ENCODE measurements at regions of chr1 and their contacts with region 1.

Region 1: GRCh38 chr1:95699149-95699953 is 465.3 kb downstream of the RWDD3 start:
- DNase-seq: no peak
- ATAC-seq: no peak
- H3K4me3 ChIP-seq: no peak overlapping the region
- H3K27ac ChIP-seq: no peak overlapping the region
- H3K4me1 ChIP-seq: no peaks in the 10 kb centered on the region
- H3K27me3 ChIP-seq: no peaks in the 10 kb centered on the region
- CTCF ChIP-seq: no peak
- EP300 ChIP-seq: no peak
- POLR2A ChIP-seq: no peak
- RAD21 ChIP-seq: no peak

Region 2: GRCh38 chr1:95685081-95685480 is 14.3 kb before region 1 on chr1:
- CTCF ChIA-PET with region 1: no interaction called
- POLR2A ChIA-PET with region 1: no interaction called
- in situ Hi-C with region 1: no loop called
- intact Hi-C with region 1: no loop called
- DNase-seq: no peak
- ATAC-seq: no peak
- H3K4me3 ChIP-seq: no peak overlapping the region
- H3K27ac ChIP-seq: no peak overlapping the region
- H3K4me1 ChIP-seq: no peaks in the 10 kb centered on the region
- H3K27me3 ChIP-seq: no peaks in the 10 kb centered on the region
- CTCF ChIP-seq: no peak
- EP300 ChIP-seq: no peak
- POLR2A ChIP-seq: no peak
- RAD21 ChIP-seq: no peak

Region 3: DNA sequence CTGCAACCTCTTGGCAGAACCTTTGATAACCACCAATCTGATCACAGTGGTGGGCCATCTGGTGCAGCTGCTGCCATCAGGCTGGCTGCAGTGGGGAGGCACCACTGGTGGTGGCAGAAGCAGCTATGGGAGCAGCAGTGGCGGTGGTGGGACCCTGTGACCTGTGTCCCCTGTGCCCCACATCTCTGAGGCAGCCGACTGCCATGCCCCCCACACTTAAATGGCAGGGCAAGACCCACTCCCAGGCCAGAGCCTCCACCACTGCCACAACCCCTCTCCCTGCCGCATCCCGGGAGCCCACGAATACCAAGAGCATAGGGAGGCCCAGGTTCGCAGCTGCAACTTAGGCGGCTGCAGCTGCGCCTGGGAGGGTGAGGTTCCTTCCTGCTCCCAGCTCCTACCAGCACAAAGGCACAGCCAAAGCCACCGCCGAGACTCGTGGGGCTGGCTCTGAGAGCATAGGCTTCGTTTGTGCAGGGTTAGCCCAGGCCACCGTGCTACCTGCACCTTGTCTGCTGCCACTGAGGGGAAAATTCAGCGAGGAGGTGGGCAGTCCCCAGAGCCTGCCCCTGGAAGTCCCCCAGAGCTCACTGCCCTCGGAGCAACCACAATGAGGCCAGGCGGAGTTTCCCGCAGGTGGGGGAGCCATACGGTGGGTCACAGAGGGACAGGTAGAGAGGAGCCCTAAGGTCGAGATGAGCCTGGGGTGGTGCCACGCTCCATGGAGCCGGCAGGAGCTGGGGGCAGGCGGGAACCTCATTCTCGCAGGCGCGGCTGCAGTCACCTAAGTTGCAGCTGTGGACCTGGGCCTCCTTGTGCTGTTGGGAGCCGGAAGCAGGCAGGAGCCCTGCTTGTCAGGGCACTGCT is 53.4 kb after region 1 on chr1:
- CTCF ChIA-PET with region 1: no interaction called
- POLR2A ChIA-PET with region 1: no interaction called
- in situ Hi-C with region 1: loop called (anchors 10 kb)
- intact Hi-C with region 1: no loop called
- DNase-seq: no peak
- ATAC-seq: no peak
- H3K4me3 ChIP-seq: no peak overlapping the region
- H3K27ac ChIP-seq: no peak overlapping the region
- H3K4me1 ChIP-seq: no peaks in the 10 kb centered on the region
- H3K27me3 ChIP-seq: no peaks in the 10 kb centered on the region
- CTCF ChIP-seq: no peak
- EP300 ChIP-seq: no peak
- POLR2A ChIP-seq: no peak
- RAD21 ChIP-seq: no peak